Activated T-helper 2 cell treated with anti-CD3 and anti-CD28 coated beads, Interferon-gamma antibody, Interleukin-2, Interleukin-4, amounts not matched to agents 10 μg/mL and 5 μg/mL and 100 μg/mL, durations not matched to agents 14 hours and 24 hours and 36 hours (primary cell): ENCODE measurements at regions of chr10 and their contacts with region 1.

Region 1: GRCh38 chr10:87861953-87862678 is 1.2 kb downstream of the KLLN start:
- DNase-seq: peak; percentile 93
- H3K4me3 Mint-ChIP-seq: peak overlapping the region; percentile 98
- H3K27ac Mint-ChIP-seq: peak overlapping the region; percentile 96
- H3K4me1 Mint-ChIP-seq: peaks cover 28% of the 10 kb centered on the region
- H3K27me3 Mint-ChIP-seq: no peaks in the 10 kb centered on the region

Region 2: DNA sequence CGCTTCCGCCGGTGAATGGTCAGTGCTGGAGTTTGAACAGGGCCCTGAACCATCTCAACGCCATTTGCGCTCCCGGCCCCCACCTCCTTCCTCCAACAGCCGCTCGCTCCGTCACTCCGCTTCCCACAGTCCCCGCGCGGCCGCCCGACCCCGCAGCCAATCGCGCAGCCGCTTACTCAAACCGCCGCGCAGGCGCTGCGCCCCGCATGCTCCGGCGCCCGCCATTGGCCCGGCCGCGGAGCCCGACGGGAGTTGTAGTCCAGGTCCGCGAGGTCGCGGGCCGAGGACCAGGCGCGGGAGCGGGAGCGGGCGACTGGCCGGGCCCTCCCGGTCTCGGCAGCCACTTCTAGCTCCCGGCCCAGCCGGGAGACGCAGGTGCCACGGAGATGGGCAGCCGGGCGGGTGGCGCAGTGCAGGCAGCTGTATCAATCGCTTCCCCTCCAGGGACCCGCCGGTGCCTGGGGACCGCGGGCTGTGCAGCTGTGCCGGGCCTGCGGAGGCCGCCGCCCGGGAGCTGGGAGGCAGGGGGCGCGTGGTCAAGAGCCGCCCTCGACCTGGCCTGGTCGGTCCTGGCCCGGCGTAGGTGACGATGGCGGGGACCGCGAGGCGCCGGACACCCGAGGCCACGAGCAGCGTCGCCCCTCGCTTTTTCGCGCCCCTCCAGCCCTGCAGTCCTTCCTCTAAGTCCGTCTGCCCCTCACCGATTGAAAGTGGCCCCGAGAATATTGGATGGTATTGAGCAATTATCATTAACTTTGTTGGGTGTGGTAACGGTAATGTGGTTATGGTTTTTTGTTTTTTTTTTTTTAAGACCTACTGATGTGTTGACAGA is 1340.2 kb before region 1 on chr10 and contains the start of gene WAPL:
- intact Hi-C with region 1: loop called (anchors 5 kb)
- DNase-seq: peak; percentile 93
- H3K4me3 Mint-ChIP-seq: peak within 1 kb of the TSS; percentile 98
- H3K27ac Mint-ChIP-seq: peak within 1 kb of the TSS; percentile 89
- H3K4me1 Mint-ChIP-seq: peaks cover 46% of the 10 kb centered on the region
- H3K27me3 Mint-ChIP-seq: no peaks in the 10 kb centered on the region
- total RNA-seq, gene WAPL: 50.0 and 51.4 TPM in 2 replicates

Region 3: GRCh38 chr10:87817609-87818504 is 44.3 kb before region 1 on chr10 and contains the start of gene ATAD1:
- intact Hi-C with region 1: loop called (anchors 1 kb)
- DNase-seq: peak; percentile 88
- H3K4me3 Mint-ChIP-seq: peak within 1 kb of the TSS; percentile 84
- H3K27ac Mint-ChIP-seq: peak within 1 kb of the TSS; percentile 85
- H3K4me1 Mint-ChIP-seq: peaks cover 29% of the 10 kb centered on the region
- H3K27me3 Mint-ChIP-seq: peaks cover 3% of the 10 kb centered on the region
- total RNA-seq, gene ATAD1: 43.4 and 50.2 TPM in 2 replicates

Region 4: GRCh38 chr10:88064608-88065382 is 202.7 kb after region 1 on chr10:
- intact Hi-C with region 1: loop called (anchors 2 kb)
- DNase-seq: no peak
- H3K4me3 Mint-ChIP-seq: no peak overlapping the region
- H3K27ac Mint-ChIP-seq: peak overlapping the region; percentile 18
- H3K4me1 Mint-ChIP-seq: peaks cover 39% of the 10 kb centered on the region
- H3K27me3 Mint-ChIP-seq: peaks cover 11% of the 10 kb centered on the region

Region 5: DNA sequence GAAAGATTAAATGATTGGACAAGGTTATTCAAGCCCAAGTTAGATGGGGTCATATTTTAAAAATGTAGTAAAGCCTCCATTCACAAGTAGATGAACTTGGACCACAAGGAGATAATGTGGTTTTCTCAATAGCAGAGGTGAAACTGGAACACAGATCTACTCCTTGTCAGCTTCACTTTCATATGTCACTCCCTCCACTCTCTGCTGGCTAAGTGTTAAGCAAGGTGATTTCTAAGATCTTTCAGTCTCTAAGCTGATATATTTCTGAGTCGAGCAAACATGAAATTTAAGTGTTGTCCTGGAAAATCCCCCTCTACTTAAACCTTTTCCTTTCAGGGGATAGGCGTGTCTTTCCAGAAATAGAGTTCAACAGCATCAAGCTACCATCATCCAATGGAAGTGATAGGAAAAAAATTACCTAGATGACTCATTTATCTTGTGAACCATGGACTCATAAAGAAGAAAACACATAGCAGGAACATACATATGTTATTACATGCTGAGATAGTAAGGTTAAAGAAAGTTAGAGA is 276.3 kb after region 1 on chr10:
- intact Hi-C with region 1: loop called (anchors 5 kb)
- DNase-seq: no peak
- H3K4me3 Mint-ChIP-seq: no peak overlapping the region
- H3K27ac Mint-ChIP-seq: no peak overlapping the region
- H3K4me1 Mint-ChIP-seq: peaks cover 24% of the 10 kb centered on the region
- H3K27me3 Mint-ChIP-seq: peaks cover 22% of the 10 kb centered on the region

Region 6: GRCh38 chr10:88389456-88389855 is 527.3 kb after region 1 on chr10:
- intact Hi-C with region 1: loop called (anchors 2 kb)
- DNase-seq: no peak
- H3K4me3 Mint-ChIP-seq: no peak overlapping the region
- H3K27ac Mint-ChIP-seq: no peak overlapping the region
- H3K4me1 Mint-ChIP-seq: peaks cover 29% of the 10 kb centered on the region
- H3K27me3 Mint-ChIP-seq: no peaks in the 10 kb centered on the region

Region 7: DNA sequence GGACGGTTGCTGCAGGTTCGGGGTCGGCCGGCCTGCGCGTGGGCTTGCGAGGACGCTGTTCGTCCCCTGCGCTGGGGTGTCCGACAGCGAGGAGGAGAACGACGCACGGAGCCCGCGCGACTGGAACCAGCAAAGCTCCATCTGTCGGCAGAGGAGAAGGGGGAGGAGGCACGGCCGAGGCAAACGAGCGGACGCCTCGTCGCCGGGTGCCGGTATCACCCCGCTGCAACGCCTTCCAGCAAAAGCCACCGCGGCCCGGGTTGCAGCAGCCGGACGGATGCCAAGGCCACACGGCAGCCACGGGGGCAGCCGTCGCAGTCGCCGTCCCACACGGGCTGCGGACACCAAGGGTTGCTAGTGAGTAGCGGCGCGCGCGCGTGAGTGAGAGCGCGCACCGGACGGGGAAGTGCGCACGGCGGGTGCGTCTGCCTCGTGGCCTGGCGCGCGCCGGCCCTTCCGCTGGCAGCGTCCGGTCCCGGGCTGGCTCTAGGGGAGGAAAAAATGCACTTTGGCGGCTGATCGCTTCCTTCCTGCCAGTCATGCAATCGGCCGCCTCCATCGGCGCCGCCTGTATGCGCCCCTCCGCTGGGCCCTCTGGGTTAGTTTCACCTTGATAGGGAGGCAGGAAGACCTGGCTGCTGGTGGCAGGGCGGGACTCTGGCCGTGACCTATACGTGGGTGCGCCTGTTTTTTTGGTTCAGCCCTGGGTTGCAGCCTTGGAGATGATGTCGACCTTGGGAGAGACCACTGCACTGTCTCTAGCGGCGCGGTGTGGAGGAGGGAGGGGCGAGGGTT is 1018.4 kb after region 1 on chr10:
- intact Hi-C with region 1: loop called (anchors 5 kb)
- DNase-seq: peak; percentile 79
- H3K4me3 Mint-ChIP-seq: peak overlapping the region; percentile 97
- H3K27ac Mint-ChIP-seq: peak overlapping the region; percentile 98
- H3K4me1 Mint-ChIP-seq: peaks cover 59% of the 10 kb centered on the region
- H3K27me3 Mint-ChIP-seq: no peaks in the 10 kb centered on the region